Activated CD4-positive, alpha-beta T cell treated with anti-CD3 and anti-CD28 coated beads, Interleukin-2, amount 10 ng/mL, durations not matched to agents 24 days and 14 days (primary cell): ENCODE measurements at regions of chr4 and their contacts with region 1.

Region 1: GRCh38 chr4:55546756-55547465 is at the start of gene CLOCK:
- DNase-seq: peak; percentile 95
- H3K4me3 Mint-ChIP-seq: peak within 1 kb of the TSS; percentile 84
- H3K27ac Mint-ChIP-seq: peak within 1 kb of the TSS; percentile 88
- H3K4me1 Mint-ChIP-seq: peaks cover 25% of the 10 kb centered on the region
- H3K27me3 Mint-ChIP-seq: peaks cover 30% of the 10 kb centered on the region
- total RNA-seq, gene CLOCK: 9.8 and 10.8 TPM in 2 replicates

Region 2: DNA sequence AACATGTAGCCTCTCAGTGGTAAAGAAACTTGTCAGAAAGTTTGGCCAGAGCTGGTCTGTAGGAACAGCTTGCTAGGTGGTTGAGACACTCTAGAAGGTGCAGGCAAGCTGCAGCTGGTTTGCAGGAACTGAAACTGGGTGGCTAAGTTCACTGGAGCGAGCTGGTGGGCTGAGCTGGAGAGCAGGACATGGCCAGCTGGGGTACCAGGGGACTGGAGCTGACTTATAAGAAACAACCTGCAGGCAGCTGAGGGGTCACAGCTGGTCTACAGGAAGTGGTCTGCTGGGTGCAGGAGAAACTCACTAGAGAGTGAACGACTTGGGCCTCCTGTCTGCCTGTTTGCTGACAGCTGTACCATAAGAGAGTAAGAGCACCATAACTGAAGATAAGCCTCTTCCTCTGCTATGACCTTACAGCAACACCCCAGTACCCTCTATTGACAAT is 1798.6 kb before region 1 on chr4:
- intact Hi-C with region 1: no loop called
- DNase-seq: no peak
- H3K4me3 Mint-ChIP-seq: no peak overlapping the region
- H3K27ac Mint-ChIP-seq: no peak overlapping the region
- H3K4me1 Mint-ChIP-seq: no peaks in the 10 kb centered on the region
- H3K27me3 Mint-ChIP-seq: no peaks in the 10 kb centered on the region

Region 3: GRCh38 chr4:55321707-55322264 is 225.1 kb before region 1 on chr4:
- intact Hi-C with region 1: loop called (anchors 5 kb)
- DNase-seq: peak; percentile 86
- H3K4me3 Mint-ChIP-seq: no peak overlapping the region
- H3K27ac Mint-ChIP-seq: no peak overlapping the region
- H3K4me1 Mint-ChIP-seq: peaks cover 17% of the 10 kb centered on the region
- H3K27me3 Mint-ChIP-seq: no peaks in the 10 kb centered on the region

Region 4: DNA sequence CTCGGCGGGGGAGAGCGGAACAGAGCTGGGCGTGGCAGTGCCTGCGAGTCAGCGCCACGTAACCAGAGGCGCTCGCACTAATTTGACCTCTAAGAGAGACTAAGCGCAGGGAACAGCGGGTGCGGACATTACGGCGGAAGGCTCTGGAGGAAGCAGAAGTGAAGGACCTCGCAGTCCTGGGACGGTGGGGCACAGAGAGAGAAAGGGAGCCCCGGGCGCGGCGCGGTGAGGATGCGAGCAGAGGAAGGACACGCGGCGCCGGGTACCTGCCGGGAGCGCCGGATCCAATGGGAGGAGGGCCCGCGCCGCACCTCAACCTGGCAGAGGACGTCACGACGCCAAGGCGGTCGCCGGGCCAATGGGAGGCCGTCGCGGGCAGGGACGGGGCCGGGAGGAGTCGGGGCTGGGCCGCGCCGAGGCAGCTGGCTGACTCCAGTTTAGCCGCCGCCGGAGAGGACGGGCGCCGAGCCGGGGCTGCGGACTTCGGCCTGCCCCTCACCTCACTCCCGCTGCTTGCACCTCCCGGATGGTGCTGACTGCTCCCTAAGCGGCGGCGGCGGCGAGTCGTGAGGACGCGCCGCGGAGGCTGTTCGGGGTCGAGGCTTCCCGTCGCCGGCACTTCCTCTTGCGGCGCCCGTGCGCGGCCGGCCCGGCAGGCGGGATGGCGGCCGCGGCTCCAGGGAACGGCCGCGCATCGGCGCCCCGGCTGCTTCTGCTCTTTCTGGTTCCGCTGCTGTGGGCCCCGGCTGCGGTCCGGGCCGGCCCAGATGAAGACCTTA is 151.2 kb before region 1 on chr4 and contains the start of gene TMEM165:
- intact Hi-C with region 1: loop called (anchors 1 kb)
- DNase-seq: peak; percentile 97
- H3K4me3 Mint-ChIP-seq: peak within 1 kb of the TSS; percentile 100
- H3K27ac Mint-ChIP-seq: peak within 1 kb of the TSS; percentile 97
- H3K4me1 Mint-ChIP-seq: peaks cover 33% of the 10 kb centered on the region
- H3K27me3 Mint-ChIP-seq: no peaks in the 10 kb centered on the region
- total RNA-seq, gene TMEM165: 87.2 and 99.1 TPM in 2 replicates

Region 5: DNA sequence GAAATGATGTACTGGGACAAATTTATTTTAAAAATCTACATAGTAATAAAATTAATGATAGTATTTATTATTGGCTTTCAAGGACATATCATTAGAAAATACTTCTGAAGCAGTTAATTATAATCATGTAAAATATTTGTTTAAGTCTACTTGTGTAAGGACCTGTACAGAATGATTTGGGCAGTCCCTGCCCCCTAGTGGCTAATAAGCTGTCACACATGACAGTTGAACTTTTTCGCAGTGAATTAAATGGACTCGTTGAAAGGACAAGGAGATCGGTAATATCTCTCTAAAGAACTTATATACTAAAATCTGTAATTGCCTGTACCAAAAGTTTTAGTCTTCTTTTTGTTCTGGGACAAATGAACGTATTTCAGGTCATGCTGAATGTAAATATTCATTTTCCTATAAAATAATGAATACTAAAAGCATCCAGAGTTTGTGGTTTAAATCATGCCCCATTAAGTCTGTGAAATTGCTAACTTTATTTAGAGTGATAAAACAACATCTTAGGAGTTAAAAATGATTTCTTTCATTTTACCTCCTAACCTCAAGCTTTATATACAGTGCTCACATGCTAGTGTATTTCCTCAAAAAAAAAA is 320.2 kb after region 1 on chr4:
- intact Hi-C with region 1: loop called (anchors 5 kb)
- DNase-seq: peak; percentile 69
- H3K4me3 Mint-ChIP-seq: no peak overlapping the region
- H3K27ac Mint-ChIP-seq: no peak overlapping the region
- H3K4me1 Mint-ChIP-seq: peaks cover 19% of the 10 kb centered on the region
- H3K27me3 Mint-ChIP-seq: no peaks in the 10 kb centered on the region